PC-9 (cell line): ENCODE measurements at regions of chr9 and their contacts with region 1.

Region 1: DNA sequence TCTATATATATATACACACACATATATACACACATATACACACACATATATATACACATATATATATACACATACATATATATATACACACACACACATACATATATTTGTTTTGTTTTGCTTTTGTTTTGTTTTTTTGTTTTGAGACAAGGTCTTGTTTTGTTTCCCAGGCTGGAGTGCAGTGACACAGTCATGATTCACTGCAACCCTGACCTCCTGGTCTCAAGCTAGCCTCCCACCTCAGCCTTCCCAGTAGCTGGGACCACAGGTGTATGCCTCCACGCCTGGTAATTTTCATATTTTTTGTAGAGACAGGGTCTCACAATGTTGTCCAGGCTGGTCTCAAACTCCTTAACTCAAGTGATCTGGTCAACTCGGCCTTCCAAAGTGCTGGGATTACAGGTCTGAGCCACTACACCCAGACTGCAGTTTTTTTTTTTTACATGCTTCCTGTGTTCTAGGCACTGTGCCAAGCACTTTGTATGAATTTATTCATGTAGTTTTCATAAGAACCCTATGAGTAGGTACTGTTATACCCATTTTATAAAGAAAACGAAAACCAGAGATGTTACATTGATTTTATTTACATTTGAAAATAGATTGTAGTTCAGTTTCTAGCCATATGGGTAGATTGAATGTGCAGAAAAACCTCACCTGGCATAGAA is 120.7 kb downstream of the PBX3 start:
- DNase-seq: no peak
- H3K4me3 ChIP-seq: no peak overlapping the region
- H3K27ac ChIP-seq: no peak overlapping the region
- H3K4me1 ChIP-seq: no peaks in the 10 kb centered on the region
- H3K27me3 ChIP-seq: no peaks in the 10 kb centered on the region
- CTCF ChIP-seq: no peak

Region 2: GRCh38 chr9:125850763-125851162 is 17.1 kb before region 1 on chr9:
- CTCF ChIA-PET with region 1: no interaction called
- POLR2A ChIA-PET with region 1: interaction called, 13 read pairs
- intact Hi-C with region 1: no loop called
- DNase-seq: no peak
- H3K4me3 ChIP-seq: no peak overlapping the region
- H3K27ac ChIP-seq: no peak overlapping the region
- H3K4me1 ChIP-seq: peaks cover 9% of the 10 kb centered on the region; the same call in 1 of the 2 replicates
- H3K27me3 ChIP-seq: no peaks in the 10 kb centered on the region
- CTCF ChIP-seq: no peak

Region 3: DNA sequence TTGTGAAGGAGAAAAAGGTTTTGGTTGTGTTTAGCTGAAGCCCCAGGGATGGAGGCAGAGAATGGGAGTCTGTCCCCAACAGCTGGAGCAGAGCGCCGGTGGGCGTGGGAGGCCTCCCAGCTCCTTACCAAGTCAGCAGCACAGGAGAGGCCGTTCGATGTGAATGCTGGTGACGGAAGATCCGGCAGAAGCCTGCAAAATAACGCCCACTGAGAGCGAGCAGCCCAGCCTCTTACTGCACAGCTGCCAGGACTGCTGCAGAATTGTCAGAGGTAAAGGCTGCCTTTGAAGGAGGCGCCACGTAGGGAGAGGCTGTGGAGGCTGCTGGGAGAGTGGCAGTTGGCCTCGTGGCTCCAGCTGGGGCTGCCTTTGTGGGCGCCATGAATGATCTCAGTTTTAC is 1228.3 kb after region 1 on chr9:
- CTCF ChIA-PET with region 1: no interaction called
- POLR2A ChIA-PET with region 1: no interaction called
- intact Hi-C with region 1: no loop called
- DNase-seq: no peak
- H3K4me3 ChIP-seq: no peak overlapping the region
- H3K27ac ChIP-seq: no peak overlapping the region
- H3K4me1 ChIP-seq: no peaks in the 10 kb centered on the region
- H3K27me3 ChIP-seq: no peaks in the 10 kb centered on the region
- CTCF ChIP-seq: no peak